Activated CD4-positive, alpha-beta memory T cell treated with anti-CD3 and anti-CD28 coated beads for 36 hours (primary cell): ENCODE measurements at regions of chr1 and their contacts with region 1.

Region 1: GRCh38 chr1:235415008-235415904 is 48.0 kb downstream of the TBCE start:
- DNase-seq: peak; percentile 74
- H3K4me3 Mint-ChIP-seq: no peak overlapping the region
- H3K27ac Mint-ChIP-seq: no peak overlapping the region
- H3K4me1 Mint-ChIP-seq: peaks cover 2% of the 10 kb centered on the region
- H3K27me3 Mint-ChIP-seq: no peaks in the 10 kb centered on the region

Region 2: GRCh38 chr1:235093696-235094592 is 321.3 kb before region 1 on chr1:
- CTCF ChIA-PET with region 1: interaction called, 32 read pairs
- POLR2A ChIA-PET with region 1: no interaction called
- intact Hi-C with region 1: loop called (anchors 1 kb)
- DNase-seq: peak; percentile 90
- H3K4me3 Mint-ChIP-seq: no peak overlapping the region
- H3K27ac Mint-ChIP-seq: no peak overlapping the region
- H3K4me1 Mint-ChIP-seq: peaks cover 14% of the 10 kb centered on the region
- H3K27me3 Mint-ChIP-seq: no peaks in the 10 kb centered on the region

Region 3: DNA sequence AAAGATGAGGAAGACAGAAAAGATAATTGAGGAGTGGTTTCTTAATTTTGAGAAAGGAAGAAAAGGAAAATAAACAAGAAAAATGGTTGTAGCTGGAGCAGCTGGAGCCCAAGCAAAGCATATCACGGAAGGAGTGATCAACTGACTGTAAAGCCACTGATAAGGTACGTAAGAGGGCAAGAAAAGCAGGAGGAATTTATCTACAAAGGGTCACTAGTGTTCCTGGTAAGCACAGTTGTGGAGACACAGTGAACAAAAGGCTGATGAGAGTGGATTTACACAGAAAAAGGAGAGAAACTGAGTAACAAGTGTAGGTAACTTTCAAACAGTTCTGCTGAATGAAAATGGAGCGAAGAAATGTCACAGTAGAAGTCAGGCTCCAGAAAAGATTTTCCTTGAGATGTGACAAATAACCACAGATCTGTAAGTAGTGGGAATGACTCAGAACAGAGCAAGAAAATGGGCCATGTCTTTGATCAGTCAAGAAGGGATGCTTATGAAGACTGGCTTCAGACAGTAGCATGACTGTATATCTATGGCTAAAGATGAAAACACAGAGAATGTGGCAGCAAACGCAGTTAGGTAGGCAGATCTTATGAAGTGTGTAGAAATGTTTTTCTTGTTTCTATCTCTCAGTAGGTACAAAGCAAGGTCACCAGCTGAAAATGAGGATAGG is 208.6 kb before region 1 on chr1:
- CTCF ChIA-PET with region 1: interaction called, 5 read pairs
- POLR2A ChIA-PET with region 1: no interaction called
- intact Hi-C with region 1: loop called (anchors 5 kb)
- DNase-seq: no peak
- H3K4me3 Mint-ChIP-seq: no peak overlapping the region
- H3K27ac Mint-ChIP-seq: peak overlapping the region; percentile 89
- H3K4me1 Mint-ChIP-seq: peaks cover 30% of the 10 kb centered on the region
- H3K27me3 Mint-ChIP-seq: no peaks in the 10 kb centered on the region

Region 4: DNA sequence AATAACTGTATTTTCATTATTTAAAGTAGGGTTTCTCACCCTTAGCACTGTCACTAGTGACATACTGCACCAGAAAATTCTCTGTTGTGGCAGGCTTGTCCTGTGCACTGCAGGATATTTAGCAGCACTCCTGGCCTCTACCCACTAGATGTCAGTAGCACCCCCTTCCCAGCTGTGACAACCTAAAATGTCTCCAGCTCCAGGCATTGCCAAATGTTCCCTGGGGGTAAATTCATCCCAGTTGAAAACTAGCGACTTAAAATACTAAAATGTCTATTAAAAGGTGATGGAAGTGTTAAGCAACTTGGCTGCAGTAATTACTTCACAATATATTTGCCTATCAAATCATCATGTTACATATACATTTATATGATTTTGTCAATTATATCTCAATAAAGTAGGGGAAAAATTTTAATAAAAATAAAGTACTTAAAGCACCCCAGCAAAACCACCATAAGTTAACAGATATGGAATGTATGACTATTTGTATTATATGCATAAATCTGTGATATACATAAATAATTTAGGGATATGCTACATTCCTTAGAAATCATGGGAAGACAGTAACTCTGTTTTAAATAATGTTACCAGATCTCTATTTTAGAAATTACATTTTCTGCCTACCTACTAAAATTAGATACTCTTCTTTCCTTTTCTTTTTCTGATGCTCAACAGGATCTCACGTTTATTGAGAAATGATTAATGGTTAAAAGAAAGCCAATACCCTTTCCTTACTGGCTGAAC is 161.9 kb before region 1 on chr1:
- CTCF ChIA-PET with region 1: interaction called, 56 read pairs
- POLR2A ChIA-PET with region 1: no interaction called
- intact Hi-C with region 1: loop called (anchors 1 kb)
- DNase-seq: peak; percentile 75
- H3K4me3 Mint-ChIP-seq: no peak overlapping the region
- H3K27ac Mint-ChIP-seq: no peak overlapping the region
- H3K4me1 Mint-ChIP-seq: peaks cover 24% of the 10 kb centered on the region
- H3K27me3 Mint-ChIP-seq: no peaks in the 10 kb centered on the region

Region 5: DNA sequence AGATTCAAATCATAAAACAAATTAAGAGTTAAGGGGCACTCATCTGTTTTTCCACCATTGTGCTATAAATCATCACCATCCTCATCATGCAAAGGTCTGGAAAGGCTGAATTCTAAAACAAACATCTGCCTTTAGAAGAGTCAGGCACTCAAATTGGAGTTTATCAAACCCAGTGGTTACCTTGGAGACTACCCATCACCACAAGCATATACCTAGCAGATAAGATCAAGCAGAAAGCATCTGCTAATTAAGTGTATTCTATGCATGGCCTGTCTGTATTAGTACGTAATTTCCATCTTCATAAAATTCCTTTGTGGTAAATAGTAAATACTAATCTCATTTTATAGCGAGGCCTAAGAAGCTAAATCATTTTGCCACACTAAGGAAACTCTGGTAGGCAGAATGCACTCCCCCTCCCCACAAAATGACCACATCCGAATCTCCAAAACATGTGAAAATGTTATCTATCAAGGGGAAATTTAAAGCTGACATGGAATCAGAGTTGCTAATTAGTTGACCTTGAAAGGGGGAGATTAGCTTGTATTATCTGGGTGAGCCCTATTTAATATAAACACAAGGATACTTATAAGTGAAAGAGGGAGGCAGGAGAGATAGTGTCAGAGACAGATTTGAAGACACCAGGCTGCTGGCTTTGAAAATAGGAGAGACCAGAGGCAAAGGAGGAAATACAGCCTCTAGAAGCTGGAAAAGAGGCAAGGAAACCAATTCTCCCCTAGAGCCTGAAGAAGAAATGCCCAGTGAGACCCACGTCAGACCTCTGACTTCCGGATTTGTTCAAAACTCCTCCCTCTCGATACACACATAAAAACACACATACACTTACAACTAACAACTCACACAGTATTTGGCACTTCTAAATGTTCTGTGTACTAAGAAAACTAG is 110.5 kb before region 1 on chr1:
- CTCF ChIA-PET with region 1: no interaction called
- POLR2A ChIA-PET with region 1: no interaction called
- intact Hi-C with region 1: no loop called
- DNase-seq: peak; percentile 36
- H3K4me3 Mint-ChIP-seq: peak overlapping the region; percentile 49
- H3K27ac Mint-ChIP-seq: peak overlapping the region; percentile 87
- H3K4me1 Mint-ChIP-seq: peaks cover 51% of the 10 kb centered on the region
- H3K27me3 Mint-ChIP-seq: no peaks in the 10 kb centered on the region

Region 6: GRCh38 chr1:235367000-235367908 is 48.0 kb before region 1 on chr1 and contains the start of gene TBCE:
- CTCF ChIA-PET with region 1: interaction called, 21 read pairs
- POLR2A ChIA-PET with region 1: no interaction called
- intact Hi-C with region 1: loop called (anchors 2 kb)
- DNase-seq: peak; percentile 95
- H3K4me3 Mint-ChIP-seq: peak within 1 kb of the TSS; percentile 97
- H3K27ac Mint-ChIP-seq: peak within 1 kb of the TSS; percentile 76
- H3K4me1 Mint-ChIP-seq: peaks cover 28% of the 10 kb centered on the region
- H3K27me3 Mint-ChIP-seq: no peaks in the 10 kb centered on the region
- total RNA-seq, gene TBCE: 22.7 to 26.3 TPM

Region 7: GRCh38 chr1:235984041-235984825 is 569.0 kb after region 1 on chr1:
- CTCF ChIA-PET with region 1: no interaction called
- POLR2A ChIA-PET with region 1: no interaction called
- intact Hi-C with region 1: no loop called
- DNase-seq: no peak
- H3K4me3 Mint-ChIP-seq: no peak overlapping the region
- H3K27ac Mint-ChIP-seq: no peak overlapping the region
- H3K4me1 Mint-ChIP-seq: no peaks in the 10 kb centered on the region
- H3K27me3 Mint-ChIP-seq: no peaks in the 10 kb centered on the region